ENCODE measurements at regions of chr18 and their contacts with region 1.

Region 1: DNA sequence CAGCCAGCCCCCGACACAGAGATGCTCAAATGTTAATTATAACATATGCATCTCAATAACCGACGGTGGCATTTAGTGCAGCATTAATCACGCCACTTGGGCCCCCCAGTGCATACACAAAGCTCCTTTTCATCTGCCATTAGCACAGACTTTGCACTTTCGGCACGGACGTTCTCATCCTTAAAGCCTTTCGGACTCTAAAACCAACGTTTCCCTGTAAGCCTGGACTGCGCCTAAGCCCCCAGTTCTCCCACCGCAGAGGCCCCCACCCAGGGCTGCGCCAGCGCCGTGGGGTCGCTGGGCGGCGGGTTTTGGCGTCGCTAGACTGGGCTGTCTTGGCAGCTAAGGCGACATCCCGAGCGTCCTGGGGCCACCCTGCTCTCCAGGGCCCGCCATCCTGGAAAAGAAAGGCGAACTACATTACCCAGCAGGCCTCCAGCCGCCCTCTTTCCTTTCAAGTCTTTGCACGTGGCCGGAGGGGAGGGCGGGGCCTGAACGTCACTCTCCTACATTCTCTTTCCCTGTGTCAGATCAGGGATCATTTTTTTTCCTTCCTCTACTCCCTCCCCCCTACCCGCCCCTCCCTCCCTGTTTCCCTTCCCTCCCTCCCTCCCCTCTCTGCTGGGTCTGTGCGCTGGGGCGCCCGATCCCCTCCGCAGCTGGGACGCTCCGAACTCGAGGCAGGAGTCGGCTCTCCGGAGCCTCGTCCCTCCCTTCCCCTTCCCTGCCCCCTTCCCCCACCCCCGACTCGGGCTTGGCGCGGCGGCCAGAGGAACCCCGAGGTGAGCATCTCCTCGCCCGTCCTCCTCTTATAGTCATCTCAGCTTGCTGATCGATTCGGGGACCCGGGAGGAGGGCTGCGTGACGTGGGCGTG is at the start of gene CTIF:
- DNase-seq: peak; percentile 100
- H3K4me3 ChIP-seq: peak within 1 kb of the TSS; percentile 67 to 87 (median 77)
- H3K27ac ChIP-seq: peak within 1 kb of the TSS; percentile 94 to 98 (median 96)
- H3K4me1 ChIP-seq: peaks cover 31 to 42% (median 31%) of the 10 kb centered on the region in 4 donors
- H3K27me3 ChIP-seq: no peaks in the 10 kb centered on the region
- CTCF ChIP-seq: no peak
- EP300 ChIP-seq: no peak
- POLR2A ChIP-seq: no peak
- total RNA-seq, gene CTIF: 63.1 to 137 (median 87.7) TPM

Region 2: DNA sequence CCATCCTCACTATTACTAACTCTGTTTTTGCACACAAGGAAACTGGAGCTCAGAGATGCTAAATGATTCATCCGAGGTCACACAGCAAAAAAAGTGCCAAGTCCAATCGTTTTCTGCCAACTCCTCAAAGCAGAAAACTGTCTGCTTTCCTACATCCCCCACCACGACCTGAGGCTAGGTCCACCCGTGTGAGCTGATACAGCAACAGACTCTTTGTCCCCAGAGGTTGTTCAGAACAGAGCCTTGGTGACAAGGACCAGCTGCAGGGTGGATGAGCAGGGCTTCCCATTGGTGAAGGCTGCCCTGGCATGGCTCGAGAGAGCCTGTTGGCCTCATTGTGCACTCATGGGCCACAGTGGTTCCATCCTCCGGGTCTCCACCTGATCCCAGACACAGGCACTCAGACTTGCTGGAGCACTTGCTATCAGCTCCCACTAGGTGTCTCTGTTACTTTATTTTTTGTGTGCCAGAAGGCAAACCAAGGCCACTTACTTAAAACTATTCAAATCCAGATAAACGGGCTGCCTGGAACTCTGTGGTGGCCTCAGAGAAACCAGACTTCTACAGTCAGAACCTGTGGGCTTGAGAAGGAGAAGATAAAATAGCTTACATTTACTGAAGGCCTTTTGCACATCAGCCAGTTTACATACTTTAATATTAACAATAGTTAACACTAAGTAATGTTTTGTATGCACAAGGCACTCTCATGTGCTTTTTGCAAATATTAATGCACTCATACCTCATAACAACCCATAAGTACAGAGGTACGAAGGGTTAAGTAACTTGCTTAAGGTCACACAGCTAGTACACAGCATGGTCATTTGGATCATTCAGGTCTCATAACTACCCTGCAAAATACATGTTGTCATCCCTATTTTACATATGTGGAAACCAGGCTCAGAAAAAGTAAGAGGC is 62.9 kb before region 1 on chr18:
- intact Hi-C with region 1: loop called (anchors 5 kb)
- DNase-seq: peak; percentile 92
- H3K4me3 ChIP-seq: no peak overlapping the region
- H3K27ac ChIP-seq: no peak overlapping the region
- H3K4me1 ChIP-seq: peaks cover 0 to 7% (median 2%) of the 10 kb centered on the region in 4 donors
- H3K27me3 ChIP-seq: no peaks in the 10 kb centered on the region
- CTCF ChIP-seq: peak; percentile 81 to 92 (median 91)
- EP300 ChIP-seq: no peak
- POLR2A ChIP-seq: no peak

Region 3: DNA sequence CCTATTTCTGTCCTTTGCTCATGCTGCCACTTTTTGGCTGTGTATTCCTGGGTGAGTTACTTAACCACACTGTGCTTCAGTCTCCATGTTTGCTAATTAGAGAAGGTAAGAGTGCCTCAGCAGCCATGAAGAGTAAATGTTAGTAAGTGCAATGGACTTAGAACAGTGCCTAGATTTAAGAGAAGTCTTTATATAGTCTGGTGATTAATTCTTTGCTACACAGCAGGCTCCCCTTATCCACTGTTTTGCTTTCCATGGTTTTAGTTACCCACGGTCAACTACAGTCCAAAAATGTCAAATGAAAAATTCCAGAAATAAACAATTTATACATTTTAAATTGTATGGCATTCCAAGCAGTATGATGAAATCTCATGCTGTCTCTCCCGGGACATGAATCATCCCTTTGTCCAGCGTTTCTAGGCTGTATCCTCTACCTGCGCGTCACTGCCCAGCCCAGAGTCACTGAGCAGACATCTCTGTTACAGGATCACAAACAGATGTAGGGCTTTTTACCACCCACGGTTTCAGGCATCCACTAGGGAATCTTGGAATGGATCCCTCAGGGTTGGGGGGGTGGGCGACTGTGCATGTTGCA is 91.1 kb after region 1 on chr18:
- intact Hi-C with region 1: loop called (anchors 2 kb)
- DNase-seq: no peak
- H3K4me3 ChIP-seq: no peak overlapping the region
- H3K27ac ChIP-seq: peak overlapping the region; percentile 53 to 73 (median 62)
- H3K4me1 ChIP-seq: peaks cover 0 to 38% (median 28%) of the 10 kb centered on the region in 4 donors
- H3K27me3 ChIP-seq: no peaks in the 10 kb centered on the region
- CTCF ChIP-seq: no peak
- EP300 ChIP-seq: no peak
- POLR2A ChIP-seq: no peak